ENCODE measurements at regions of chr12 and their contacts with region 1.

Region 1: DNA sequence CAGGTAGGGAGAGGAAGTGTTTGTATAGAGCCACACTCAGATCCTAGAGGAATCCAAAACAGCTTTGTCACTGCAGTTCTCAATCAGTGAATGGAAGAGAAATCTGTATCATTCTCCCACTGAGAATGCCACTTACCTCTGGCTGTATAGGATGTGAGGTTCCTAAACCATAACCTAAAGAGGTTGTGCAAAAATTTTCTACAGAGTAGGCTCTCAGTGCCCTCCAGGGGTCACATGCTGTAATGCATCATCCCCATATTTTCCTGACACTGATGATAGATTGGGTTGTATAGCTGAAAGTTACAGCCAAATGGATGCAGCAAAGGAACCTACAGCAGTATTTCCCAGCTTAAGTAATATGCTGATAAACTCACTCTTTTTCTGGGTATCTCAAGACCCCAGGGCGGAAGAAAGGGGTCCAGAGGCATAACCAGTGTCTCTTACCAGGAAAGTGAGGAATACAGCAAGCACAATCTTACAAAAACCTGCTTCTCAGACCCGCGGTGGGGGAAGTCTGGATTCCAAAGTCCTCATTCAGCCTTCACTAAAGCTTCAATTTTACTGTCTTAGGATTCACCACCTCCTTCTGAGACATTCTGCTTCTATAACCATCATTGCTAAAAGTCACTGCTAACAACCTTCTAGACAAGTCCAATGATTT is 3.8 kb downstream of the BCDIN3D start:
- DNase-seq: no peak
- H3K4me3 ChIP-seq: no peak overlapping the region
- H3K27ac ChIP-seq: no peak overlapping the region
- H3K4me1 ChIP-seq: peaks cover 10 to 25% (median 14%) of the 10 kb centered on the region in 3 donors
- H3K27me3 ChIP-seq: no peaks in the 10 kb centered on the region
- CTCF ChIP-seq: peak in 5 of 6 experiments; percentile 33 to 67 (median 50)
- POLR2A ChIP-seq: no peak

Region 2: GRCh38 chr12:49776413-49776812 is 62.7 kb before region 1 on chr12:
- intact Hi-C with region 1: loop called (anchors 5 kb)
- DNase-seq: no peak
- H3K4me3 ChIP-seq: no peak overlapping the region
- H3K27ac ChIP-seq: no peak overlapping the region
- H3K4me1 ChIP-seq: peaks cover 0 to 22% (median 12%) of the 10 kb centered on the region in 3 donors
- H3K27me3 ChIP-seq: no peaks in the 10 kb centered on the region
- CTCF ChIP-seq: peak; percentile 46 to 87 (median 84)
- POLR2A ChIP-seq: no peak

Region 3: DNA sequence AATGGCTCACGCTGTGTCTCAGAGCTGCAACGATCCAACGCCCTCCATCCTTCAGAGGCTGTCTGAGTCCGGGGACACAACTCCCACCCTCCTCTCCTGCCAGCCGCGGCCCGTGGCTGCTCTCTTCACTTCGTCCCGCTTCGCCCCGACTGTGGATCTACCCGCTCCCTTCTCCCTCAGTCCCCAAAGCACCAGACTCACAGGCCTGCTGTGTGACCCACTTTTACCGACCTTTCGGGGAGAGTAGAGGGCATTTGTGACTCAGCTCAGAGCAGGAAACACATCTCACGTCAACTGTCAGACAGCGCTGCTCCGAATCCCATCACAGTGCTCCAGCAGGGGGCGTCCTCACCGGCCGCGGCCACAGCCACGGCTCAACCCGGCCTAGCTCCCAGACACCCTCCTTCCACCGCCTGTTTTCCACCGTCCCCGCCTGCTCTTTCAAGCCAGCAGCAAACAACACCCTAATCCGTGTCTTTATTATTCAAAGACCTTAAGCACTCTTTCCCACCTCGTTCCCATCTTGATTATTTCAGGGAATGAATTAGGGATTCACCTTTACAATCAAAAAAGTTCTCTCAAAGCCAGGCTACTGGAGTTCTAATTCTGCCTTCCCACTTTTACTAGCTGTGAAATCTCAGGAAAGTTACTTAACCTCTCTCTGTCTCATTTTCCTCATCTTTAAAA is 106.4 kb after region 1 on chr12:
- intact Hi-C with region 1: no loop called
- DNase-seq: no peak
- H3K4me3 ChIP-seq: peak overlapping the region in 3 of 4 donors; percentile 5 to 55 (median 14)
- H3K27ac ChIP-seq: peak overlapping the region; percentile 28 to 87 (median 54)
- H3K4me1 ChIP-seq: peaks cover 7 to 58% (median 36%) of the 10 kb centered on the region in 3 donors
- H3K27me3 ChIP-seq: peaks cover 0 to 13% (median 0%) of the 10 kb centered on the region in 4 donors
- CTCF ChIP-seq: peak; percentile 35 to 89 (median 84)
- POLR2A ChIP-seq: no peak

Measured in esophagus squamous epithelium (tissue), 5 donors.